ENCODE measurements at regions of chr17 and their contacts with region 1.

Region 1: DNA sequence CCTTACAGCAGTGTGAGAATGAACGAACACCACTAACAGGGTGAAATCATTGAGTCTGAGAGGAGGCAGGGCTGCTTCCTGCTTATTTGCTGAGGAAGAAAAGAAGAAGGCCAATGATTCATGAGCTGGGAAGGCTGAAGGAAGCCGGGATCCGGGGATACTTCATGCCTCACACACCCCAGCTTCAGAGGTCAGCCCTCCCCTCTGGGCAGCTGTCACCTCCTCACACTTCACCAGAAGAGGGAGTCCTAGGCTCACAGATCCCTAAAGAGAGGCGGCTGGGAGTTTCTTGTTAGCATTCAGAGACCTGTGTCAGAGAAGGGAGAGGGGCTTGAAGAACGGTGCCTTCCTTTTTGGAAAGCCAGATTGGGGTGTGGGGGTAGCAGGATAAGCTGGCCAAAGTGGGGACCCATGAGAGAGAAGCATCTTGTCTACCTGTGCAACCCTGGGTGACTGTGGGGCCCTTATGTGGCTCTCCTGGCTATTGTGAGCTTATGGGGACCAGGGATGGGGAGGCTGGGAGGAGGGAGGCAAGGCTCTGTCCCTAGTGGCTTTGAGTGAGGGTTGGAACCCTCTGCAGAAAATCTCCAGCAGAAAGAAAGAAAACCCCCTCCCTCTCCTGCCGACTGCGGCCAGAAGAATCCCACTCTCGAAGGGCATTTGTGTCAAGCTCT is 94.6 kb downstream of the RGS9 start:
- DNase-seq: peak; percentile 88
- H3K4me3 Mint-ChIP-seq: no peak overlapping the region
- H3K27ac Mint-ChIP-seq: peak overlapping the region; percentile 75
- H3K4me1 Mint-ChIP-seq: peaks cover 31% of the 10 kb centered on the region
- H3K27me3 Mint-ChIP-seq: peaks cover 23% of the 10 kb centered on the region

Region 2: DNA sequence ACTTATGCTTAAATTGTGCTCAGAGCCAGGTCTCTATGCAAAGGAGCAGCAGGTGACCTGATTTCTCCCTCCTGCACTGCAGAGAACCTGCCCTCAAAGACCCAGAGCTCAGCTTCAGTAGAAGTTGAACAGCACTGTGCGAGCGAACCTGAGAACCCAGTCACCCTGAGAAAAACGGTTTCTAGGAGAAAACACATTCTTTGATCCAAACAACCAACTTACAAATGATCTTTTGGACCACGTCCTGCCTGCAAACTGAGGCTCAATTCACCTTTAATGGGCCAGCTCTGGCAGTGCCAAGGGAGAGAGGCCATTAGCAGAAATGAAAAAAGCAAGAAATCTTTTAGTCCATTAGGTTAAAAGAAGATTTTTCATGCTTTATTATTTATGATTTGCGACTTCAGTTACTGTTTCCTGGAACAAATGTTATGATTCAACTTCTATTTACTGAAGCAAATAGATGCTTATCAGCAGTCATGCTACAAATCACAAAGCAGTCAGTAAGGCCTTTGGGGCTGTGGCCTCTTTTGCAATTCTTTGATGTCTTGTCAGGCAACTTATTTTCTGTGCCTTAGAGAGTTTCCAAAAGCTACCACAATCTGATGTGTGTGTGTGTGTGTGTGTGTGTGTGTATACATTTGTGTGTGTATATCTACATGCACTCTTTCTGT is 246.8 kb before region 1 on chr17:
- intact Hi-C with region 1: loop called (anchors 2 kb)
- DNase-seq: peak; percentile 88
- H3K4me3 Mint-ChIP-seq: peak overlapping the region; percentile 83
- H3K27ac Mint-ChIP-seq: peak overlapping the region; percentile 99
- H3K4me1 Mint-ChIP-seq: peaks cover 51% of the 10 kb centered on the region
- H3K27me3 Mint-ChIP-seq: no peaks in the 10 kb centered on the region

Region 3: GRCh38 chr17:65268832-65269231 is 37.0 kb after region 1 on chr17:
- intact Hi-C with region 1: no loop called
- DNase-seq: no peak
- H3K4me3 Mint-ChIP-seq: no peak overlapping the region
- H3K27ac Mint-ChIP-seq: no peak overlapping the region
- H3K4me1 Mint-ChIP-seq: peaks cover 12% of the 10 kb centered on the region
- H3K27me3 Mint-ChIP-seq: peaks cover 28% of the 10 kb centered on the region

Region 4: DNA sequence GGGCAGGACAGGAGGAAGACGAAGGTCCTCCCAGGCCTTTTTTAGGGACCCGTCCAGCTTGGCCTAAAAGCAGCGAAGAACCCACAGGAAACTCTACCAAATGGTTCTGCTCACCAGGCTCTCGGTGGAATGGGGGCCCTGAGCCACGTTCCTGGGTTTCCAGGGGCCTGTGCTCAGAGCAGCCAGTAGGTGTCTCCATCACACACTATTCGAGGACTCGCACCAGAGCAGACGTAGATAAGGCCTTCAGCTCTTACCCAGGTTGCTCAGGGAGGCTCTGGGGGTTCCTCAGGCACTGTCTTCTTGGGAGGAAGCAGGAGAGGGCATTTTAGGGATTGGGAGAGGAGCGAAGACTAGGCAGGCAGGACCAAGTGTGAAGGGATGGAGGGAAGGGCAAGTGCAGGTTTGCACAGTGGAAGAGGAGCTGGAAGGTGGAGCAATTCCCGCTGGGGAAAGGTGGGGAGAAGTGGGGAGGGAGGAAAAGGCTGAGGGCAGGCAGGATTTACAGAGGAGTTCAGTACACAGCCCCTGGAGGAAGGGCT is 62.5 kb after region 1 on chr17:
- intact Hi-C with region 1: loop called (anchors 1 kb)
- DNase-seq: peak; percentile 85
- H3K4me3 Mint-ChIP-seq: no peak overlapping the region
- H3K27ac Mint-ChIP-seq: no peak overlapping the region
- H3K4me1 Mint-ChIP-seq: no peaks in the 10 kb centered on the region
- H3K27me3 Mint-ChIP-seq: peaks cover 6% of the 10 kb centered on the region

Region 5: GRCh38 chr17:65305116-65305515 is 73.3 kb after region 1 on chr17:
- intact Hi-C with region 1: no loop called
- DNase-seq: no peak
- H3K4me3 Mint-ChIP-seq: no peak overlapping the region
- H3K27ac Mint-ChIP-seq: no peak overlapping the region
- H3K4me1 Mint-ChIP-seq: no peaks in the 10 kb centered on the region
- H3K27me3 Mint-ChIP-seq: peaks cover 14% of the 10 kb centered on the region

Region 6: DNA sequence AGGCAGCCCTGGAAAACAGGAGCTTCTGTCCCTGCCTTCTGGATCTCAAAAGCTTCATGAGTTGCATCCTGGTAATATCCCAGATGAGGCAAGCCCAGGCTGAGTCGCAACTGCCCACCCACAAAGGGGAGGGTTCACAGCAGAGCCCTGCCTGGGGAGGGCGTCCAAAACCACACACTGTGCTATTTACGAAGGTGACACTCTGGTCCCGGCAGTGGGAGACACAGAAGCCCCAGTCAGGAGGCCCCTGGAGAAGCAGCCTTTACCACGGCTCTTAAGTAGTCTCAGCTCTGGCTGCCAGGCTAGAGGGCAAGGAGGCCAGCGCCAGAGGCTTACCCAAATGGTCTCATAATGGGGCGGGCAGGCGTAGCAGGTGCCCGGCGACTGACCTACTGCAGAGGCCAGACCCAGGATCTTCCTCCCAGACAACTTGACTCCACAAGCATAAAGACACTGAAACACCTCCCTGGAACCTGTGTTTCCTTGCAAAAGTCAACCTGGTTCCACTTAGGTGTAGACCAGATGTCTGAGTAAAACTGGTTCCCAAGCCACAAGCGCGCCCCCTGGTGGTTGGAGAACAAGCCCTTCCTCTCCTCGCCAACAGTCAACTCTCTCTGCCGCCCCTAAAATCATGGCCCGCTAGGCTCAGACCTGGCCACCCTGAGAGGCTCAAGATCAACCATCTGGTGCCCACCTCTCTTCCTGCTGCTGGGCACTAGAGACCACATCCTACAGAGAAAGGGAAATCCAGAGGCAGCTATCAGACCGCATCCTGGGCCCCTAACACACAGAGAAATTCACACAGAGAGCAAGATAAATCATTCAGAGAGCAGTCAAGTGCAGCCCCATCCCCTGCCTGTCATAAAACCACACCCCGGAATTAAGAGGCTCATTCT is 324.5 kb after region 1 on chr17:
- intact Hi-C with region 1: loop called (anchors 1 kb)
- DNase-seq: peak; percentile 96
- H3K4me3 Mint-ChIP-seq: peak overlapping the region; percentile 20
- H3K27ac Mint-ChIP-seq: no peak overlapping the region
- H3K4me1 Mint-ChIP-seq: peaks cover 22% of the 10 kb centered on the region
- H3K27me3 Mint-ChIP-seq: peaks cover 18% of the 10 kb centered on the region

Region 7: GRCh38 chr17:65988081-65988850 is 756.5 kb after region 1 on chr17:
- intact Hi-C with region 1: loop called (anchors 5 kb)
- DNase-seq: peak; percentile 59
- H3K4me3 Mint-ChIP-seq: no peak overlapping the region
- H3K27ac Mint-ChIP-seq: no peak overlapping the region
- H3K4me1 Mint-ChIP-seq: no peaks in the 10 kb centered on the region
- H3K27me3 Mint-ChIP-seq: peaks cover 16% of the 10 kb centered on the region

Measured in activated CD4-positive, alpha-beta T cell treated with anti-CD3 and anti-CD28 coated beads, Interleukin-2, amount 10 ng/mL, durations not matched to agents 24 days and 14 days (primary cell).